Stomach (tissue), 19 donors: ENCODE measurements at regions of chr7 and their contacts with region 1.

Region 1: GRCh38 chr7:94423863-94424735 is 29.4 kb downstream of the COL1A2 start:
- DNase-seq: no peak
- H3K4me3 ChIP-seq: no peak overlapping the region
- H3K27ac ChIP-seq: peak overlapping the region in 3 of 5 donors; percentile 16 to 54 (median 44)
- H3K4me1 ChIP-seq: no peaks in the 10 kb centered on the region
- H3K27me3 ChIP-seq: no peaks in the 10 kb centered on the region
- CTCF ChIP-seq: no peak
- EP300 ChIP-seq: no peak
- POLR2A ChIP-seq: no peak

Region 2: DNA sequence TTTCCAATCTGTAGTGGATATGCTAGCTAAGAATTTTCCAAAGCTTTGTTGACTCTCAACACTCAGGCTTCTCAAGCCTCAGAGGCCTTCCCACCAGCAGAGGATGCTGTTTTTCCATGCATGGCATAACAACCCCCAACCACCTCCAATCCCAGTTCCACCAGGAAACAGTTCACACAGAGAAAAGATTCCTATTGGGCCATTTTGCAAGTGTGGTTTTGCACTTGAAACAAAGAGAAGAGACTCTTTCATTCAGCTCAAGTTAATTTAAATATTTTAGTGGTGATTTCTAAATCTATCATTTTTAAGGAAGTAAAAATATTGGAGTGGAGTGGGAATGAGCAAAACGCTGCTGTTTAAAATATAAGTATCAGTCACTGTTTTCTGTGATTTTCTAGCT is 135.0 kb before region 1 on chr7:
- intact Hi-C with region 1: loop called (anchors 10 kb)
- DNase-seq: peak; percentile 56 to 92
- H3K4me3 ChIP-seq: no peak overlapping the region
- H3K27ac ChIP-seq: no peak overlapping the region
- H3K4me1 ChIP-seq: no peaks in the 10 kb centered on the region
- H3K27me3 ChIP-seq: no peaks in the 10 kb centered on the region
- CTCF ChIP-seq: peak in 5 of 7 experiments; percentile 67 to 88 (median 75)
- EP300 ChIP-seq: no peak
- POLR2A ChIP-seq: no peak

Region 3: DNA sequence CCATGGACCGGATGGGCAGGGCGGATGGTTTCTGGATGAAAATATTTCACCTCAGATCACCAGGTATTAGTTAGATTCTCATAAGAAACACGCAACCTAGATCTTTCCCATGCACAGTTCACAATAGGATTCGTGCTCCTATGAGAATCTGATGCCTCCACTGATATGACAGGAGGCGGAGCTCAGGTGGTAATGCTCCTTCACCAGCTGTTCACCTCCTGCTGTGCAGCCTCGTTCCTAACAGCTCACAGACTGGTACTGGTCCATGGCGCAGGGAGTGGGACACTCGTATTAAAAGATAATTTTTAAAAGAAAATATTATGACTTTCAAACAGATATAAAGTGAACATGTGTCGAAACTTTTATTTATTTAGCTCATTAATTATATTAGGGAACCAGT is 79.0 kb after region 1 on chr7:
- intact Hi-C with region 1: no loop called
- DNase-seq: no peak
- H3K4me3 ChIP-seq: no peak overlapping the region
- H3K27ac ChIP-seq: no peak overlapping the region
- H3K4me1 ChIP-seq: no peaks in the 10 kb centered on the region
- H3K27me3 ChIP-seq: no peaks in the 10 kb centered on the region
- CTCF ChIP-seq: no peak
- EP300 ChIP-seq: no peak
- POLR2A ChIP-seq: no peak